ENCODE measurements at regions of chr18 and their contacts with region 1.

Region 1: GRCh38 chr18:12321339-12321738 is 13.3 kb downstream of the TUBB6 start:
- DNase-seq: no peak

Region 2: DNA sequence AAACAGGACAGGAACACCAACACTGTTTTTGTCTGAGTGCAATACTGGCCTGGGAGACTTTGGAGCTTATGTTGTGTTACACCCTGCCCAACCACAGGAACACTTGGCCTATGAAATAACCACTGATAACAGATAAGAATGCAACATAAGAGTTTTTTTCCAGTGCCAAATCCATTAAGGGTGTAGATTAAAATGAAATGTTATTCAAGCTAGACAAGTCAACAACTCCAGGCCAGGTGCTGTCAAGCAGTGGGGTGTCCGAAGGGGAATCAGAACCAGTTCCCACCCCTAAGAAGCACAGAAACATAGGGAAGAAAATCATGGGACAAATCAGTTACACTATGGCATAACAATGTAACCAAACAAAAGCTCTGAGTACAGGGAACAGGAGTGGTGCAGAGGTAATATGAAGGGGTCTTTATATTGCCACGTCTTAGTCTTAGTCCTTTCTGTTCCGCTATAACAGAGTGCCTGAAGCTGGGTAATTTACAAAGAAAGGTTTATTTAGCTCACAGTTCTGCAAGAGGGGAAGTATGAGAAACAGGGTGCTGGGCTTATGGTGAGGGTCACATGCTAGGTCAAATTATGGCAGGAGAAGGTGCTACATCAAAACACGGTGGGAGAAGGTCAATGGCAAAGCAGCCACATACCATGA is 51.9 kb after region 1 on chr18:
- intact Hi-C with region 1: loop called in 1 of 2 experiments (anchors 5 kb)
- DNase-seq: no peak

Measured in posterior vena cava (tissue), 2 donors.